Natural killer cell (primary cell): ENCODE measurements at regions of chr9 and their contacts with region 1.

Region 1: DNA sequence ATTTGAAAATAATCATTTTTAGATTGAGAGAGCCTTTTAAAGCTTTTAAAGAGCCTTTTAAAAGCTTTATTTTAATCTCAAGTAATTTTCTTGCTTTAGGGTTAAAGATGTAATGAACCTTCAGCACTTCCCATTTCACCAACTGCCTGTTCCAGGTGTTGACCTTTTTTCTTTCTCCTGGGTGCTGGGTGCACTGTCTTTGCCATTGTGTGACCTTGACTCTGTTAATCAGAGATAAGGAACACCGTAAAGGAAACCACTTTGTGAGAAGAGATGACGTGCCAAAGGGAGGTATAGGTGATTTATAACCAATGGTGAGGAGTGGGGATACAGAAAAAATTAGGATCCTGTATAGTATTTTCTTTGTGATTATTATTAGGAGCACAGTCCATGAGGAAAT is 68.2 kb downstream of the NAA35 start:
- DNase-seq: no peak
- ATAC-seq: no peak
- H3K4me3 ChIP-seq: no peak overlapping the region
- H3K4me3 Mint-ChIP-seq: no peak overlapping the region
- H3K27ac ChIP-seq: no peak overlapping the region
- H3K27ac Mint-ChIP-seq: peak overlapping the region in 1 of 2 donors; percentile 3
- H3K4me1 ChIP-seq: no peaks in the 10 kb centered on the region
- H3K4me1 Mint-ChIP-seq: no peaks in the 10 kb centered on the region
- H3K27me3 ChIP-seq: no peaks in the 10 kb centered on the region
- H3K27me3 Mint-ChIP-seq: no peaks in the 10 kb centered on the region
- CTCF ChIP-seq: no peak

Region 2: DNA sequence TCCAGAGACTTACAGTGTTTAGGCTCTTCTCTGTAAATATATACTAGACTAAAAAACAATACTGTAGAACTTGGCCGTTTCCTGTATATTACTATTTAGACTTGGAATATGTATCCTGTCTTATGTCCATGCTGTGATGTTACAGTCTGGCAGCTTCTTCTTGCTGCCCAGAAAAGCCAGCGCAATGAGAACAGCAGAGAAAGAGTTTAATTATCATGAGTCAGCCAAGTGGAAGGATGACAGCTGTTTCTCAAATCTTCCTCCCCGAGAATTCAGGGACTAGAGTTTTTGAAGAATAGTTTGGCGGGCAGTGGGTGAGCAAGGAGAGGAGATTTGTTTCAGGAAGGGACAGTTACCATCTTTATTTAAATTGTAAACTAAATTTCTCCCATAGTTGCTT is 30.6 kb before region 1 on chr9:
- intact Hi-C with region 1: no loop called
- DNase-seq: no peak
- ATAC-seq: no peak
- H3K4me3 ChIP-seq: no peak overlapping the region
- H3K4me3 Mint-ChIP-seq: no peak overlapping the region
- H3K27ac ChIP-seq: no peak overlapping the region
- H3K27ac Mint-ChIP-seq: peak overlapping the region in 1 of 2 donors; percentile 7
- H3K4me1 ChIP-seq: no peaks in the 10 kb centered on the region
- H3K4me1 Mint-ChIP-seq: peaks cover 0 to 7% of the 10 kb centered on the region in 2 donors
- H3K27me3 ChIP-seq: no peaks in the 10 kb centered on the region
- H3K27me3 Mint-ChIP-seq: no peaks in the 10 kb centered on the region
- CTCF ChIP-seq: no peak

Region 3: DNA sequence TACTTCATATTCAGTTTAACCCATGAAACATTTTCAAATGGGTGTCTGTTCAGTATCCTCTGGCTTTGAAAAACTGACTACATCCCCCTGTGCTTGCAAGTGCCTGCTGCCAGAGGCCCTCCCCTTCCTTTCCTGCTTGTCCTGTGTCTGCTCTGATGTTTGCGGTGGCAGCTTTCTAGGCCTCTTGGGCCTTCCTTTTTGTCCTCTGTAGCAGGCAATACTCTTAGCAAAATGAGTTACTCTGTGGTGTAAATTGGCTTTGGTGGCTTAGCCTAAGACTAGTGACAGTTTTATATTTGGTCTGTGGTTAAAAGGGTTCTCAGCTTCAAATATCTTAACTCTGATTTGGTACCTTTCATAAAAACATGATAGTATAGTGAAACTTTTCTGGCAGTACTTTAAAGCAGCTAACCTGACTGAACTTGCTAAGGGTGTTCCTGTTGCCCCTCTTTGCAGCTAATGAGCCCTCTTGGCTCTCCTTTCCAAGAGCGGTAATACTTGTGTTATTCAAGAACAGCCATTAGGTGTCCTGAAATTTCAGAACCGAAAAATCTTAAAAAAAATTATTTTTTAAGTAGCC is 13.6 kb after region 1 on chr9:
- intact Hi-C with region 1: loop called (anchors 1 kb)
- DNase-seq: peak in 1 of 2 donors; percentile 25
- ATAC-seq: peak in 1 of 3 donors; percentile 59
- H3K4me3 ChIP-seq: no peak overlapping the region
- H3K4me3 Mint-ChIP-seq: no peak overlapping the region
- H3K27ac ChIP-seq: no peak overlapping the region
- H3K27ac Mint-ChIP-seq: peak overlapping the region; percentile 1 to 83
- H3K4me1 ChIP-seq: no peaks in the 10 kb centered on the region
- H3K4me1 Mint-ChIP-seq: peaks cover 6 to 17% of the 10 kb centered on the region in 2 donors
- H3K27me3 ChIP-seq: no peaks in the 10 kb centered on the region
- H3K27me3 Mint-ChIP-seq: no peaks in the 10 kb centered on the region
- CTCF ChIP-seq: no peak